ENCODE measurements at regions of chr6 and their contacts with region 1.

Region 1: DNA sequence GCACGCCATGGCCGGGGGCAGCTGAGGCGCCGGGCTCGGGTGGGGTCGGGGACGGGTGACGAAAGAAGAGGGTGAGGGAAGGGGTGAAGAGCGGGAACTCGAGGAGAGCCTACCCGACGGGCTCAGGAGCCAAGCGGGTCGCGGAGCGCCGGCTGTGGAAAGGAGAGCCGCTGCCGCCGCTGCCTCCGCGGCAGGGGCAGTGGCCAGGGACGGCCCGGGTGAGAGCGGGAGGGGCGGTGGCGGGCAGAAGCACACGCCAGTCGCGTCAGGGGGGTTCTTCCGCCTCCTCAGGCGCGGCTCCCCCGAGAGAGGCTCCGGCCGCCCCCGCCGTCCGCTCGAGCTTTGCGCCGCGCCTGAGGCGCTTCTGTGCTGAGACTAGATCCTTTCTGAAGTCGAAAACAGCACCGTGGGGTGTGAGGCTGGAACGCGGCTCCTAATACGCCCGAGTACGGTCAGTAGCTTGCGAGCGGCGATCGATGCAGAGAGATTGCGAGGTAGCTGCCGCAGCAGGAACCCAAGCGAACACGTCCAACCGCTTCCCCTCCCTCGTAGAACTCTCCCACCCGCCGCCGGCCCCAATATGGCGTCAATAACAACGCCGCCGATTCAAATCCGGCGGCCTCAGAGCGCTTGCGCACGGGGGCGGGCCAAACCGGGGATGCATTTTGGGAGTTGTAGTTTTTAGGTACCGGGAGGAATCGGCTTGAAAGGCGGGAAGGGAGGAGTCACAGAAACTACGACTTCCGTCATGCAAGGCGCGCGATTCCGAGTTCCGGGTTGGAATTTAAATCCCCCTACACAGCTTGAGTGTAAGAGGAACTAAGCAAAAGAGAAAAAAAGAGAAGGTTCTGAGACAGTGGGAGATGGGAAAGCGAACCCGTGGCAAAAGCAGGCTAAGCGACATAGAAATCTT is at the start of gene AKIRIN2:
- DNase-seq: peak; percentile 85 to 99 (median 88)
- ATAC-seq: peak; percentile 80
- H3K4me3 ChIP-seq: peak within 1 kb of the TSS; percentile 96
- H3K27ac ChIP-seq: peak within 1 kb of the TSS; percentile 90
- H3K4me1 ChIP-seq: peaks cover 8 to 15% of the 10 kb centered on the region in 2 experiments
- H3K27me3 ChIP-seq: no peaks in the 10 kb centered on the region
- CTCF ChIP-seq: no peak
- EP300 ChIP-seq: no peak
- POLR2A ChIP-seq: peak; percentile 97
- RAD21 ChIP-seq: no peak
- polyA plus RNA-seq, gene AKIRIN2: 5.8 to 9.1 TPM

Region 2: DNA sequence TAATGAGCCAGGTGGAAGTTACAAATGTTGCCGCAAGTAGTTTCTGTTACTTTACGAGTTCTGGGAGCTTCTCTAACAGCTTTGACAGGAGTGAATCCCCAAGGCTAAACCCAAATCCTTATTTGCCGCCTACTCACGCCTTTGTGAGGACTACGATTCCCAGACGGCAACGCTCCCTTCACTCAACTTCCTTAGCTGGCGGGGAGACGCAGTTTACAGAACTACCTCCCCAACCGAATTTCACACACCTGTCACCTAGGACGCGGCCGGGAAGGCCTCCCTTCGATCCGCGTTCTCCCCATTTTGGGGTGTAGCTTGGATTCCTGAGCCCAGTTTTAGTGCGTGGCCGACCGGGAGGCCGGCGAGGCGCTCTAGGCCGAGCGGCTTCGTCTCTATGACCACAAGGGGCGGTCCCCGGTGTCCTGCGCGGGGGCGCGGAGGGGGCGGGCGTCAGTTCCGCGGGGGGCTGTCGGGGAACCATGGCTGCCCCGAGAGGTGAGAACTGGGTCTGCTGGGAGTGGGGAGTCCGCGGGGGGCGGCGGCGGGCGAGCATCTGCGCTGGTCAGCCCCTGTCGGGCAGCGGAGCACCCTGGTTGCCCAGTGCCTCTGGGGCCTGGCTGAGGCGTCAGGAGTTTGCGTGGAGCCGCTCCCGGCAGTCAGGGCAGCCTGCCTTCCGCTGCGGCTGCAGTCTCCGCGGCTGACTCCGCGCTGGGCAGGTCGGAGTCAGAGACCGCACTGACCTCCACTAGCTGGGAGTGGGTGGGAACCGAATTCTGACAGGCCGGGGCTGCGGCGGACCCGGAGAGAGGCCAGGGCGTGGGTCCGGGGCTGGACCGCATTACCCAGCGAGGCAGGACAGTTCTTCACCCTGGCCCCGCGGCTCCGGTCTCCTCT is 229.2 kb before region 1 on chr6 and contains the start of gene SLC35A1:
- CTCF ChIA-PET with region 1: no interaction called
- POLR2A ChIA-PET with region 1: no interaction called
- in situ Hi-C with region 1: no loop called
- intact Hi-C with region 1: loop called (anchors 10 kb)
- DNase-seq: peak; percentile 89 to 92 (median 90)
- ATAC-seq: peak; percentile 94
- H3K4me3 ChIP-seq: peak within 1 kb of the TSS; percentile 98
- H3K27ac ChIP-seq: peak within 1 kb of the TSS; percentile 100
- H3K4me1 ChIP-seq: peaks cover 5 to 9% of the 10 kb centered on the region in 2 experiments; a peak in 4 of 5 replicates
- H3K27me3 ChIP-seq: no peaks in the 10 kb centered on the region
- CTCF ChIP-seq: no peak
- EP300 ChIP-seq: no peak
- POLR2A ChIP-seq: peak; percentile 86
- RAD21 ChIP-seq: no peak
- polyA plus RNA-seq, gene SLC35A1: 36.1 to 37.1 TPM

Region 3: GRCh38 chr6:87674286-87674685 is 27.6 kb before region 1 on chr6:
- CTCF ChIA-PET with region 1: no interaction called
- POLR2A ChIA-PET with region 1: interaction called, 10 read pairs
- in situ Hi-C with region 1: no loop called
- intact Hi-C with region 1: no loop called
- DNase-seq: peak in 2 of 4 experiments; percentile 12 to 18
- ATAC-seq: no peak
- H3K4me3 ChIP-seq: no peak overlapping the region
- H3K27ac ChIP-seq: peak overlapping the region; percentile 28; the same call in 1 of the 3 replicates
- H3K4me1 ChIP-seq: 0 out of 5 replicates have a peak, but pooled peaks cover 0 to 2% of the 10 kb centered on the region in 2 experiments
- H3K27me3 ChIP-seq: no peaks in the 10 kb centered on the region
- CTCF ChIP-seq: no peak
- EP300 ChIP-seq: 0 out of 2 replicates have a peak, but pooled peaks have one; percentile 10
- POLR2A ChIP-seq: no peak
- RAD21 ChIP-seq: no peak

Region 4: DNA sequence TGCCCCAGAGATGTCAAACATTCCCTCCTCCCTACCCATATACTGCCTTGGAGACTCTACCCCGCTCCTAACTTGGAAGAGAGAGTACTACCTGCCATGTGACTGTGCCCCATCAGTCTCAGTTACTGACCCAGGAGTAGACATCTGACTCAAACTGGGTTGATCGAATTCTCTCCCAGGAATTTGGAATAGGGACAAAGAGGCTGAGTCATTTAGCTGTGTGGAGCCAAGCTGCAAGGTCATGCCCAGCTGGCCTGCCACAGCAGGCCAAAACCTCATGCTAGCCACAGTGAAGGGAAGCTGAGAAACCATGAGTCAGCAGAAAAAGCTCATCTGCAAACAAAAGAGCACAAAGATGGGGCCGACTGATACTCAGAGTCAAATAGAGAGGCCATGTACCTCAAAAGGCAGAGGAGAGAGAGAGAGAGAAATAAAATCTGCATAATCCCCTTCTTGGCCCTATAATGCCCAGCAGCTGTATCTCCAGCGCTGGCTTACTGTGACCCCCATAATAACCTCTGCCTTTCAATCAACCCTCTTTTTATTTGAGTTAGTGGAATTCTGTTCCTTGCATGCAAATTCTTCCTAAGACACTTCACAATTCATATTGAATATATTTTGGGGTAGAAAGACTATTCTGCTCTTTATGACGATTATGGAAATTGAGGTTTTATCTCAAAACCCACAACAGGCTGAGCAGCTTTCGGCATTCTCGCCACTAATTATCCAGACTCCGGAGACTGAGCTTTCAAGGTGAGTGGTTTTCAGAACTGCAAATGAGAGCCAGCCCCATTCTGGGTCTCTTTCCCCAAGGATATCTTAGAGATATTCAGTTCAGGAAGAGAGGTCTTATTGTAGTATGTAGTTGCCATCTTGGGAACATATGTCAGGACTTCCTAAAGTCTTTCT is 21.5 kb after region 1 on chr6:
- CTCF ChIA-PET with region 1: no interaction called
- POLR2A ChIA-PET with region 1: interaction called, 36 read pairs
- in situ Hi-C with region 1: no loop called
- intact Hi-C with region 1: loop called (anchors 2 kb)
- DNase-seq: peak; percentile 66 to 92 (median 74)
- ATAC-seq: peak; percentile 87
- H3K4me3 ChIP-seq: no peak overlapping the region
- H3K27ac ChIP-seq: peak overlapping the region; percentile 67
- H3K4me1 ChIP-seq: peaks cover 14 to 40% of the 10 kb centered on the region in 2 experiments
- H3K27me3 ChIP-seq: no peaks in the 10 kb centered on the region
- CTCF ChIP-seq: peak in 1 of 3 experiments; percentile 4; a peak in 1 of 6 replicates
- EP300 ChIP-seq: peak; percentile 86
- POLR2A ChIP-seq: no peak
- RAD21 ChIP-seq: peak in 1 of 2 experiments; percentile 27; a peak in 1 of 4 replicates

Region 5: DNA sequence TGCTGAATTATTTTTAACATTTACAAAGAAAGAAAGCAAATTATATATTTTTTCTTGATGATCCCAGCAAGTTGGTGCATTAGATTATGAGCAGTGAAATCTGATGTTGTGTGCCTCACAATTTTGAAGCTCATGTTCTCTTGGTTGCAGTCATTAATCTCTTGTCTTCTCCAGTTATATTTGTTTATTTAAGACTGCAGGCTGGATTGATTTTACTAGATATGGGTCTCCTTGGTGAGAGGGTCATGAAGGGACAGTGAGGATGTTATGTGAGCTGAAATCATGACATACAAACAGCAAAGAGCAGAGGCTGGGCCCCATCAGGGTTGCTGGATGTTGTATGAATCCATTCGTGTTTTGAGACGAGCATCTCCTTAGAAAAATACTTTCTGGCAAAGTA is 64.3 kb after region 1 on chr6:
- CTCF ChIA-PET with region 1: no interaction called
- POLR2A ChIA-PET with region 1: interaction called, 11 read pairs
- in situ Hi-C with region 1: no loop called
- intact Hi-C with region 1: no loop called
- DNase-seq: no peak
- ATAC-seq: no peak
- H3K4me3 ChIP-seq: no peak overlapping the region
- H3K27ac ChIP-seq: no peak overlapping the region
- H3K4me1 ChIP-seq: no peaks in the 10 kb centered on the region
- H3K27me3 ChIP-seq: no peaks in the 10 kb centered on the region
- CTCF ChIP-seq: no peak
- EP300 ChIP-seq: no peak
- POLR2A ChIP-seq: no peak
- RAD21 ChIP-seq: no peak

Measured in K562 (cell line).